ENCODE measurements at regions of chr1 and their contacts with region 1.

Region 1: GRCh38 chr1:54397090-54397591 is 9.1 kb downstream of the SSBP3 start:
- DNase-seq: no peak
- ATAC-seq: peak; percentile 80
- H3K4me3 ChIP-seq: no peak overlapping the region
- H3K27ac ChIP-seq: peak overlapping the region; percentile 60; the same call in 1 of the 2 replicates
- H3K4me1 ChIP-seq: peaks cover 11% of the 10 kb centered on the region; the same call in 1 of the 2 replicates
- H3K27me3 ChIP-seq: no peaks in the 10 kb centered on the region
- CTCF ChIP-seq: no peak

Region 2: GRCh38 chr1:54289712-54290233 is 107.4 kb before region 1 on chr1:
- CTCF ChIA-PET with region 1: no interaction called
- POLR2A ChIA-PET with region 1: interaction called, 15 read pairs
- in situ Hi-C with region 1: no loop called
- intact Hi-C with region 1: no loop called
- DNase-seq: no peak
- ATAC-seq: peak; percentile 44
- H3K4me3 ChIP-seq: no peak overlapping the region
- H3K27ac ChIP-seq: no peak overlapping the region
- H3K4me1 ChIP-seq: peaks cover 3% of the 10 kb centered on the region; the same call in 1 of the 2 replicates
- H3K27me3 ChIP-seq: no peaks in the 10 kb centered on the region
- CTCF ChIP-seq: no peak

Region 3: DNA sequence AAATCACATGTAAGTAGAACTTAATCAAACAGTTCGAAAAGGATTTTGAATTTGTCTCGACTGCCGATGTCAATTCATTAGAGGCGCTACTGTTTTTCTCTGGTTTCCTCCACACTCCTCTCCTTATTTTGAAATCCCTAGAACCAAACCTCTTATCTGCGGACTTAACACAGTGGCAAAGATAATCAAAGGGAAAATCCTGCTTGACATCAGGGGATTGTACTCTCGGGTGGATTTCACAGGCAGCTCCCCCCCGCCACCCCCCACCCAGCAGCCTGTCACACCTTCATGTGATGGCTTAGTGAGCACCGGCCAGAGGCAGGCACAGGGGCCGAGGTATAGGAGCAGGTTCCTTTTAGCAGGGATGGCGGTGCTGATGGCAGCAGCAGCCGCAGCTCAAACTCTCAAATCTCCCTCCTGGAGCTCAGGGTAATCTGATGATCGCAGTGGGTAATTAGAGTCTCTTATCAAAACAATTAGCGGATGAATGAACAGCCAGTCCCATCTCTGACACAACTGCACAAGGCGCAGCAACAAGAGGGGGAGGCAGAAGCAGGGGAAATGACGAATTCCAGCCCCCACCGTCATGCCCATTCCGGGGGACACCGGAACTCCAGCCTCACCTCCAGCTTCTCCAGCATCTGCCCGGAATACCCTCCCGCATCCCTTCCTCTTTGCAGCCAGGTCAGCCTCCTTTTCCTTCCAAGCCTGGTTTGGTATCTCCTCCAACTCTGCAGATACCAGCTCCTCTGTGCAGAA is 71.3 kb before region 1 on chr1:
- CTCF ChIA-PET with region 1: interaction called, 12 read pairs
- POLR2A ChIA-PET with region 1: no interaction called
- in situ Hi-C with region 1: no loop called
- intact Hi-C with region 1: no loop called
- DNase-seq: no peak
- ATAC-seq: no peak
- H3K4me3 ChIP-seq: no peak overlapping the region
- H3K27ac ChIP-seq: no peak overlapping the region
- H3K4me1 ChIP-seq: no peaks in the 10 kb centered on the region; the same call in 1 of the 2 replicates
- H3K27me3 ChIP-seq: no peaks in the 10 kb centered on the region
- CTCF ChIP-seq: no peak

Measured in Panc1 (cell line).